ENCODE measurements at regions of chr4 and their contacts with region 1.

Region 1: GRCh38 chr4:89665677-89666076 is 171.3 kb downstream of the SNCA start:
- DNase-seq: no peak
- H3K4me3 Mint-ChIP-seq: no peak overlapping the region
- H3K27ac Mint-ChIP-seq: peak overlapping the region; percentile 76
- H3K4me1 Mint-ChIP-seq: peaks cover 38% of the 10 kb centered on the region
- H3K27me3 Mint-ChIP-seq: no peaks in the 10 kb centered on the region
- CTCF ChIP-seq: no peak

Region 2: GRCh38 chr4:89681215-89681614 is 15.5 kb after region 1 on chr4:
- CTCF ChIA-PET with region 1: interaction called, 5 read pairs
- POLR2A ChIA-PET with region 1: interaction called, 67 read pairs
- intact Hi-C with region 1: loop called (anchors 2 kb)
- DNase-seq: peak; percentile 82
- H3K4me3 Mint-ChIP-seq: peak overlapping the region; percentile 91
- H3K27ac Mint-ChIP-seq: peak overlapping the region; percentile 94
- H3K4me1 Mint-ChIP-seq: peaks cover 18% of the 10 kb centered on the region
- H3K27me3 Mint-ChIP-seq: no peaks in the 10 kb centered on the region
- CTCF ChIP-seq: no peak

Measured in MCF 10A (cell line).